ENCODE measurements at regions of chr16 and their contacts with region 1.

Region 1: GRCh38 chr16:31458844-31459721 is at the start of gene ARMC5:
- DNase-seq: peak; percentile 91 to 99 (median 95)
- ATAC-seq: peak; percentile 72
- H3K4me3 ChIP-seq: peak within 1 kb of the TSS; percentile 97
- H3K4me3 Mint-ChIP-seq: peak within 1 kb of the TSS; percentile 94
- H3K27ac ChIP-seq: peak within 1 kb of the TSS; percentile 98 to 99
- H3K27ac Mint-ChIP-seq: peak within 1 kb of the TSS; percentile 98
- H3K4me1 ChIP-seq: peaks cover 56% of the 10 kb centered on the region
- H3K4me1 Mint-ChIP-seq: peaks cover 49% of the 10 kb centered on the region
- H3K27me3 ChIP-seq: no peaks in the 10 kb centered on the region
- H3K27me3 Mint-ChIP-seq: no peaks in the 10 kb centered on the region
- CTCF ChIP-seq: peak; percentile 71
- total RNA-seq, gene ARMC5: 8.5 to 10.8 TPM

Region 2: GRCh38 chr16:31117391-31118197 is 341.5 kb before region 1 on chr16 and contains the start of gene KAT8:
- CTCF ChIA-PET with region 1: no interaction called
- POLR2A ChIA-PET with region 1: interaction called, 26 read pairs
- intact Hi-C with region 1: no loop called
- DNase-seq: peak; percentile 93 to 99 (median 96)
- ATAC-seq: peak; percentile 91
- H3K4me3 ChIP-seq: peak within 1 kb of the TSS; percentile 68
- H3K4me3 Mint-ChIP-seq: peak within 1 kb of the TSS; percentile 88
- H3K27ac ChIP-seq: peak within 1 kb of the TSS; percentile 87 to 95
- H3K27ac Mint-ChIP-seq: peak within 1 kb of the TSS; percentile 83
- H3K4me1 ChIP-seq: peaks cover 23% of the 10 kb centered on the region
- H3K4me1 Mint-ChIP-seq: peaks cover 17% of the 10 kb centered on the region
- H3K27me3 ChIP-seq: no peaks in the 10 kb centered on the region
- H3K27me3 Mint-ChIP-seq: no peaks in the 10 kb centered on the region
- CTCF ChIP-seq: no peak
- total RNA-seq, gene KAT8: 114 to 124 TPM

Region 3: GRCh38 chr16:31186176-31186575 is 272.9 kb before region 1 on chr16:
- CTCF ChIA-PET with region 1: no interaction called
- POLR2A ChIA-PET with region 1: no interaction called
- intact Hi-C with region 1: no loop called
- DNase-seq: peak in 1 of 14 experiments; percentile 40
- ATAC-seq: peak; percentile 15
- H3K4me3 ChIP-seq: no peak overlapping the region
- H3K4me3 Mint-ChIP-seq: peak overlapping the region; percentile 63
- H3K27ac ChIP-seq: no peak overlapping the region
- H3K27ac Mint-ChIP-seq: peak overlapping the region; percentile 58
- H3K4me1 ChIP-seq: peaks cover 67% of the 10 kb centered on the region
- H3K4me1 Mint-ChIP-seq: peaks cover 98% of the 10 kb centered on the region
- H3K27me3 ChIP-seq: no peaks in the 10 kb centered on the region
- H3K27me3 Mint-ChIP-seq: no peaks in the 10 kb centered on the region
- CTCF ChIP-seq: no peak

Region 4: GRCh38 chr16:31421587-31421986 is 37.5 kb before region 1 on chr16:
- CTCF ChIA-PET with region 1: no interaction called
- POLR2A ChIA-PET with region 1: no interaction called
- intact Hi-C with region 1: no loop called
- DNase-seq: peak in 4 of 14 experiments; percentile 16 to 71 (median 35)
- ATAC-seq: no peak
- H3K4me3 ChIP-seq: no peak overlapping the region
- H3K4me3 Mint-ChIP-seq: no peak overlapping the region
- H3K27ac ChIP-seq: no peak overlapping the region
- H3K27ac Mint-ChIP-seq: no peak overlapping the region
- H3K4me1 ChIP-seq: peaks cover 7% of the 10 kb centered on the region
- H3K4me1 Mint-ChIP-seq: no peaks in the 10 kb centered on the region
- H3K27me3 ChIP-seq: no peaks in the 10 kb centered on the region
- H3K27me3 Mint-ChIP-seq: peaks cover 20% of the 10 kb centered on the region
- CTCF ChIP-seq: no peak

Region 5: GRCh38 chr16:31440516-31441184 is 18.4 kb before region 1 on chr16:
- CTCF ChIA-PET with region 1: interaction called, 13 read pairs
- POLR2A ChIA-PET with region 1: interaction called, 4 read pairs
- intact Hi-C with region 1: no loop called
- DNase-seq: no peak
- ATAC-seq: no peak
- H3K4me3 ChIP-seq: no peak overlapping the region
- H3K4me3 Mint-ChIP-seq: peak overlapping the region; percentile 1
- H3K27ac ChIP-seq: no peak overlapping the region
- H3K27ac Mint-ChIP-seq: no peak overlapping the region
- H3K4me1 ChIP-seq: peaks cover 14% of the 10 kb centered on the region
- H3K4me1 Mint-ChIP-seq: peaks cover 10% of the 10 kb centered on the region
- H3K27me3 ChIP-seq: no peaks in the 10 kb centered on the region
- H3K27me3 Mint-ChIP-seq: no peaks in the 10 kb centered on the region
- CTCF ChIP-seq: no peak

Region 6: GRCh38 chr16:31487720-31488467 is 28.8 kb after region 1 on chr16:
- CTCF ChIA-PET with region 1: interaction called, 7 read pairs
- POLR2A ChIA-PET with region 1: interaction called, 45 read pairs
- intact Hi-C with region 1: no loop called
- DNase-seq: peak; percentile 60 to 93 (median 74)
- ATAC-seq: peak; percentile 86
- H3K4me3 ChIP-seq: peak overlapping the region; percentile 89
- H3K4me3 Mint-ChIP-seq: peak overlapping the region; percentile 92
- H3K27ac ChIP-seq: peak overlapping the region; percentile 45 to 51
- H3K27ac Mint-ChIP-seq: peak overlapping the region; percentile 91
- H3K4me1 ChIP-seq: peaks cover 27% of the 10 kb centered on the region
- H3K4me1 Mint-ChIP-seq: peaks cover 13% of the 10 kb centered on the region
- H3K27me3 ChIP-seq: no peaks in the 10 kb centered on the region
- H3K27me3 Mint-ChIP-seq: no peaks in the 10 kb centered on the region
- CTCF ChIP-seq: no peak

Region 7: GRCh38 chr16:31695667-31696066 is 236.6 kb after region 1 on chr16:
- CTCF ChIA-PET with region 1: no interaction called
- POLR2A ChIA-PET with region 1: interaction called, 9 read pairs
- intact Hi-C with region 1: loop called (anchors 1 to 5 kb)
- DNase-seq: peak in 12 of 14 experiments; percentile 27 to 93 (median 53)
- ATAC-seq: peak; percentile 94
- H3K4me3 ChIP-seq: no peak overlapping the region
- H3K4me3 Mint-ChIP-seq: no peak overlapping the region
- H3K27ac ChIP-seq: peak overlapping the region in 1 of 2 donors; percentile 50
- H3K27ac Mint-ChIP-seq: no peak overlapping the region
- H3K4me1 ChIP-seq: peaks cover 31% of the 10 kb centered on the region
- H3K4me1 Mint-ChIP-seq: peaks cover 14% of the 10 kb centered on the region
- H3K27me3 ChIP-seq: no peaks in the 10 kb centered on the region
- H3K27me3 Mint-ChIP-seq: no peaks in the 10 kb centered on the region
- CTCF ChIP-seq: no peak

Region 8: GRCh38 chr16:31713071-31713944 is 254.2 kb after region 1 on chr16:
- CTCF ChIA-PET with region 1: interaction called, 4 read pairs
- POLR2A ChIA-PET with region 1: interaction called, 16 read pairs
- intact Hi-C with region 1: no loop called
- DNase-seq: peak; percentile 81 to 94 (median 88)
- ATAC-seq: peak; percentile 82
- H3K4me3 ChIP-seq: peak overlapping the region; percentile 93
- H3K4me3 Mint-ChIP-seq: peak overlapping the region; percentile 100
- H3K27ac ChIP-seq: peak overlapping the region; percentile 83 to 87
- H3K27ac Mint-ChIP-seq: peak overlapping the region; percentile 96
- H3K4me1 ChIP-seq: peaks cover 33% of the 10 kb centered on the region
- H3K4me1 Mint-ChIP-seq: peaks cover 80% of the 10 kb centered on the region
- H3K27me3 ChIP-seq: no peaks in the 10 kb centered on the region
- H3K27me3 Mint-ChIP-seq: no peaks in the 10 kb centered on the region
- CTCF ChIP-seq: no peak